AG04450 (cell line): ENCODE measurements at regions of chr1 and their contacts with region 1.

Region 1: DNA sequence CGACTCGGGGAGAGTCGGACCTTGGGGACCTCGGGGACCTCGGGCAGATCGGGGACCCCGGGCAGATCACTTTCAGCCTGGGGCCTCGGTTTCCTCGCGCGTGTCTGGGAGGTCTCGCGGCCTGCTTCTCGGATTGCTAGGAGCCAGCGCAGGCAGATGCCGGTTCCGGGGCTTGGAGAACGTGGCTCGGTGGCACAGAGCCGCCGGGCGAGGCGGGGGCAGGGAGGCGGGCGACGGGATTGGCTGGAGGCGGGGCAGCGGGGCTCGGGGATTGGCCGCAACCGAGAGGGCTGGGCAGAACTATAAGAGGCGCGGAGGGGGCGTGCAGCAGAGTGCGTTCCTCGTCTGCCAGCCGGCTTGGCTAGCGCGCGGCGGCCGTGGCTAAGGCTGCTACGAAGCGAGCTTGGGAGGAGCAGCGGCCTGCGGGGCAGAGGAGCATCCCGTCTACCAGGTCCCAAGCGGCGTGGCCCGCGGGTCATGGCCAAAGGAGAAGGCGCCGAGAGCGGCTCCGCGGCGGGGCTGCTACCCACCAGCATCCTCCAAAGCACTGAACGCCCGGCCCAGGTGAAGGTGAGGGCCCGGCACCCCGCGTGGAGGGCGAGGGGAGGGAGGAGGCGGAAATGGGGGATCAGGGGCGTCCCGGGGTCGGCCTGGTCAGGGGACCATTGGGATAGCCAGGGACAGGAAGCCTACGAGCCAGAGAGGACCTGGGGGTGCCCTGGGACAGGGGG is at the start of gene MFSD2A:
- DNase-seq: peak; percentile 75
- H3K4me3 ChIP-seq: peak within 1 kb of the TSS; percentile 70
- H3K27ac ChIP-seq: peak within 1 kb of the TSS; percentile 39
- H3K27me3 ChIP-seq: no peaks in the 10 kb centered on the region
- CTCF ChIP-seq: no peak
- polyA plus RNA-seq, gene MFSD2A: 1.6 and 2.6 TPM in 2 replicates

Region 2: GRCh38 chr1:39933956-39934941 is 20.7 kb before region 1 on chr1:
- CTCF ChIA-PET with region 1: no interaction called
- POLR2A ChIA-PET with region 1: interaction called, 23 read pairs
- DNase-seq: peak; percentile 75
- H3K4me3 ChIP-seq: no peak overlapping the region
- H3K27ac ChIP-seq: peak overlapping the region; percentile 80
- H3K27me3 ChIP-seq: peaks cover 4% of the 10 kb centered on the region
- CTCF ChIP-seq: no peak